ENCODE measurements at regions of chr9 and their contacts with region 1.

Region 1: DNA sequence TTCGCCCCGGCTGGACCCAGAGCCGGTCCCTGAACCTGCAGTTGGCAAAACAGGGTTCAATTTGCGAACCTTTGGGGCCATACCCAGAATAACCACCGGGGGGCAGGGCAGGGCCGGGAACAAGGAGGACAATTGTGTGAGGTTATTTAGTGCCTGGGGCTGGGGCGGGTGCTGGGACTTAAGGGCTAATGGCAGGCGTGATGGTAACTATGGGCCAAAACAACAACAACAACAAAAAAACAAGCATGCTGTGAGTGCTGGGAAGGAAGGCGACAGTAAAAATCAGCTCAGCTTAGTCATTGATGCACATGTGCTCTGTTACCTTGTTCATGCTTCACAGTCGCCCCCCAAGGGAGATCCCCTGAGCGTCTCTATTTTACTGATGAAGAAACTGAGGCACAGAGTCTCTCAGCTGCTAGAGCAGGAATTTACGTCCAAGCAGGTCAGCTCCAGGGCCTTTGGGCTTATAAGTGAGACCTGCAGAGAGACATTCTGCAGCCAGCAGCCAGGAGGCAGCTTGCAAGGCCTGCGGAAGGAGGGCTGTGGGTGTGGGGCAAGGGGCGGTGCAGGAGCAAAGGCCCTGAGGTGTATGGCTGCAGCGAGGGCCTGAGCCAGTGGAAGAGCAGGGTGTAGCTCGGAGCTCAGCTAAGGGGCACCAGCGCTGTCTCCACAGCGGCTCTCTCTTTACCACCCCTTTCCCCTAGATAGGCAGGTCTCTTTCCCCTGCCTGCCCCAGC is 106.0 kb downstream of the PHF2 start:
- DNase-seq: peak; percentile 79
- H3K4me3 Mint-ChIP-seq: no peak overlapping the region
- H3K27ac Mint-ChIP-seq: no peak overlapping the region
- H3K4me1 Mint-ChIP-seq: no peaks in the 10 kb centered on the region
- H3K27me3 Mint-ChIP-seq: no peaks in the 10 kb centered on the region

Region 2: DNA sequence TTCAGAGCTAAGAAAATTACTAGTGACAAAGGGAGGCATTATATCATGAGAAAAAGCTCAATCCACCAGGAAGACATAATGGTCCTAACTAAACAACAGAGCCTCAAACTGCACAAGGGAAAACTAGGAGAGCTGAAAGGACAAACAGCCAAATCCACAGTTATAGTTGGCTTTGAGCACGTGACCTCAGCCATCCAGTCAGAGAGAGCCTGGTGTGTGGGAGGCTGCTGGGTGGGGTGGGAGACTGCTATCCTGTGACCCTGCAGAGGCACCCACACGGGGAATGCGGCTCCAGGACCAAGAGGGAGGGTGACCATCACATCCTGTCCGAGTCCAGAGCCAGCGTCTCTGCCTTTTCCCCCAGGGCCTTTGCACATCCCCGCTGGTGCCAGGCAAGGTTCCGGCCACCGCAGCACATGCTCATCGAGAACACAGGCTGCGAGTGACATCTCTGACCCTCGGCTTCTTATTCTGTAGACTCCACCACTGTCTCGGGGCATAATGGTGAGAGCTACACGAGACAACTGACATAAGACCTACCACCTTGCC is 39.1 kb after region 1 on chr9:
- CTCF ChIA-PET with region 1: no interaction called
- intact Hi-C with region 1: no loop called
- DNase-seq: no peak
- H3K4me3 Mint-ChIP-seq: no peak overlapping the region
- H3K27ac Mint-ChIP-seq: no peak overlapping the region
- H3K4me1 Mint-ChIP-seq: no peaks in the 10 kb centered on the region
- H3K27me3 Mint-ChIP-seq: peaks cover 8% of the 10 kb centered on the region

Region 3: DNA sequence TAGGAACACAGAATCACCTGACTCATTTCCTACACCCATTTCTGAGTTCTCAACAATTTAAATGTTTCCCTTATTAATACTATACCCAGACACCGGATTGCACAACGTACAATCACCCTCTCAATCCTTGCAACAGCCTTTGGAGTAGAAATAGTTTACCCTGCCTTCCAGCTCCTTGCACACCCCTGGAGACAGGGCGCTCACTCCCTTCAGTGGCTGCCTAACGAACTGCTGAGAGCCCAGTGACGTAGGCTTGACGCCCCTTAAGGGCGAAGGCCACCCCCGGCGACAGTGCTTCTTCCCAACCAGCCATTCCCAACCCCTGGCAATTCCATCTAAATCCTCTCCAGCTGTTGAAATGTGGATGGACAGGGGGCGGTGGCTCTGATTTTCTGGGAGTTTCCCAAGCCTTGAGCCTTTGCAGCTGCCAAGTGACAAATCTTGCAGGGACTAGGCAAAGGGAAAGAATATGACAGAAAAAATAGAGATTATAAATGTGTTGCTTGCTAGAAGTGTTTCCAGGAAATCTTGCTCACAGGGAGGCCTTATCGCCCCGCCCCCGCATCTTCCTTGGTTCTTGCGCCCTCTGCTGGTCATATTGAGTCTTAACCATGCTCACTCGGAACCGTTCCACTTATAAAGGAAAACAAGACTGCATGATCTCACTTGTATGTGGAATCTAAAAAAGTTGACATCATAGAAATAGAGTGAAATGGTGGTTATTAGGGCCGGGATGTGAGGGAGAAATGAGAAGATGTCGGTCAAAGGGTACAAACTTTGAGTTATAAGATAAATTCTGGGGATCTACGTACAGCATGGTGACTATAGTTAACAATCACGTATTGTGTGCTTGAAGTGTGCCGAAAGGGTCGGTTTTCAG is 280.4 kb after region 1 on chr9:
- CTCF ChIA-PET with region 1: interaction called, 16 read pairs
- intact Hi-C with region 1: loop called (anchors 1 kb)
- DNase-seq: peak; percentile 92
- H3K4me3 Mint-ChIP-seq: no peak overlapping the region
- H3K27ac Mint-ChIP-seq: no peak overlapping the region
- H3K4me1 Mint-ChIP-seq: peaks cover 35% of the 10 kb centered on the region
- H3K27me3 Mint-ChIP-seq: peaks cover 40% of the 10 kb centered on the region

Region 4: GRCh38 chr9:94002316-94003140 is 320.1 kb after region 1 on chr9:
- CTCF ChIA-PET with region 1: interaction called, 6 read pairs
- intact Hi-C with region 1: loop called (anchors 1 kb)
- DNase-seq: peak; percentile 60
- H3K4me3 Mint-ChIP-seq: no peak overlapping the region
- H3K27ac Mint-ChIP-seq: no peak overlapping the region
- H3K4me1 Mint-ChIP-seq: no peaks in the 10 kb centered on the region
- H3K27me3 Mint-ChIP-seq: no peaks in the 10 kb centered on the region